ENCODE measurements at regions of chr2 and their contacts with region 1.

Region 1: GRCh38 chr2:7672027-7672684 is 754.9 kb downstream of the RNF144A start:
- DNase-seq: peak; percentile 54
- ATAC-seq: peak; percentile 70
- H3K4me3 ChIP-seq: no peak overlapping the region
- H3K27ac ChIP-seq: no peak overlapping the region
- H3K4me1 ChIP-seq: no peaks in the 10 kb centered on the region
- H3K27me3 ChIP-seq: 0 out of 2 replicates have a peak, but pooled peaks cover 3% of the 10 kb centered on the region
- CTCF ChIP-seq: peak; percentile 57 to 87 (median 79); a peak in 5 of 6 replicates
- POLR2A ChIP-seq: no peak
- RAD21 ChIP-seq: peak; percentile 66

Region 2: DNA sequence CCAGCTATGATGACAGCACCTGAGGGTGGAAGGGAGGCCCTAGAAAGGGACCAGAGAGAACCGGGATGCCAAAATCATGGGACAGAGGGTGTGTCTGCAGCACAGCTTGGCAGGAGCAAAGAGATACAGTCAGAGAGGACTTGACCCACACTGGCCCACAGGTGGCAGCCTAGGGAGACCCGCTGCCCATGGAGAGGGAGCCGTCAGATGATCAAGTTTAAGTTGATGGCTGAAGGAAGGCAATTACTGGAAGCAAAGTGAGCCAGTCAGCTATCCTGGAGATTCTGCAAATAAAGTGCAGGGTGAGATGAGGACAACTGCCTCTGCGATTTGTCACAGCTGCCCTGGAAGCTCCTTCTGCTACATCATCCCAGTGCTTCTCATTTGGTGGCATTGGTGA is 880.5 kb before region 1 on chr2:
- CTCF ChIA-PET with region 1: no interaction called
- POLR2A ChIA-PET with region 1: no interaction called
- RAD21 ChIA-PET with region 1: no interaction called
- intact Hi-C with region 1: no loop called
- DNase-seq: no peak
- ATAC-seq: peak; percentile 90
- H3K4me3 ChIP-seq: no peak overlapping the region
- H3K27ac ChIP-seq: no peak overlapping the region
- H3K4me1 ChIP-seq: no peaks in the 10 kb centered on the region
- H3K27me3 ChIP-seq: 0 out of 2 replicates have a peak, but pooled peaks cover 3% of the 10 kb centered on the region
- CTCF ChIP-seq: peak in 2 of 3 experiments; percentile 45 to 48; a peak in 4 of 6 replicates
- POLR2A ChIP-seq: no peak
- RAD21 ChIP-seq: 0 out of 2 replicates have a peak, but pooled peaks have one; percentile 11

Region 3: DNA sequence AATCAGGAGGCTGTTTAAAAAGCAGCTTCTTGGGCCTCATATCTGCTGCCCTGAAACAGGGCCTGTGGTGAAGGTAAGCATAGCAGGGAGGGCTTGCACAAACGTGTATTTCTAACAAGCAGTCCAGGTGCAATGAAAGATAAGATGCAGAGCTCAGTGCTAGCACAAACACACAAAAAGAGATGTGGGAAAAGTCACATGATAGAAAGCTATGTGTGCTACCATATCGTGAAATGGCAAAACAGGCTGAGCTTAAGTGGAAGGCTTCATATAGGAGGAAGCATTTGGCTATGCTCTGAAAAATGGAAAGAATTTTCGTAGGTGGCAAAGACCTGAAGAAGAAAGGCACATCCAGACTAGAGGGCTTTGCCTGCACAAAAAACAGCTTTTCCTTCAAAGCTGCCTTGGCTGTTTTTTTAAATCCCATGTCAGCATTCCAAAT is 784.4 kb before region 1 on chr2:
- CTCF ChIA-PET with region 1: no interaction called
- POLR2A ChIA-PET with region 1: no interaction called
- RAD21 ChIA-PET with region 1: no interaction called
- intact Hi-C with region 1: no loop called
- DNase-seq: no peak
- ATAC-seq: no peak
- H3K4me3 ChIP-seq: no peak overlapping the region
- H3K27ac ChIP-seq: no peak overlapping the region
- H3K4me1 ChIP-seq: no peaks in the 10 kb centered on the region
- H3K27me3 ChIP-seq: no peaks in the 10 kb centered on the region; the same call in 1 of the 2 replicates
- CTCF ChIP-seq: no peak
- POLR2A ChIP-seq: no peak
- RAD21 ChIP-seq: no peak

Region 4: DNA sequence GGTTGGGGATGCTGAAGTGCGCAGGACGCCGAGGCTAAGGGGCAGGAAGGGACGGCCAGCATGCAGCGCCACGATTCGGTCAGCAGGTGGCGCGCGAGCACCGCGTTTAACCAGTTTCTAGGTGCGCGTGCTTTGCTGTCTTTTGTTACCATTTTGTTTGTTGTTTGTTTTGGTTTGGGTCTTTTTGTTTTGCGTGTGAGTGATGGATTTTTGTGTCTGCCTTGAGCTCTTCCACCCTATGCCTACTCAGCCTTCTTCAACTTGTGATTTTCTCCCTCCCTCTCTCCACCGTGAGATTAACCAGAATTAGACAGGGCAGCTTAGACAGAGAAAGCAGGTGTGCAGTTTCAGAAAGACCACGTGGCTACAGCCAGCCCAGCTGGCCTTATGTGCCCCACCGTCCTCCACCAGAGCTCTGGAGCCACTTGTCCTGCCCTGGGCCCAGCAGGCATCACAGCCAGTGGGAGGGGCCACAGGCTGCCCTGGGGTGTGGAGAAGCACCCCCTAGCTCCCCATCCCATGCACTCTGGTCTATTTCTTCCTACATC is 574.7 kb before region 1 on chr2:
- CTCF ChIA-PET with region 1: no interaction called
- POLR2A ChIA-PET with region 1: no interaction called
- RAD21 ChIA-PET with region 1: no interaction called
- intact Hi-C with region 1: loop called (anchors 5 kb)
- DNase-seq: peak; percentile 36
- ATAC-seq: peak; percentile 97
- H3K4me3 ChIP-seq: peak overlapping the region; percentile 10 to 33; a peak in 2 of 4 replicates
- H3K27ac ChIP-seq: no peak overlapping the region
- H3K4me1 ChIP-seq: peaks cover 5 to 9% of the 10 kb centered on the region in 2 experiments
- H3K27me3 ChIP-seq: no peaks in the 10 kb centered on the region
- CTCF ChIP-seq: peak; percentile 65 to 97 (median 89)
- POLR2A ChIP-seq: no peak
- RAD21 ChIP-seq: peak; percentile 92

Region 5: DNA sequence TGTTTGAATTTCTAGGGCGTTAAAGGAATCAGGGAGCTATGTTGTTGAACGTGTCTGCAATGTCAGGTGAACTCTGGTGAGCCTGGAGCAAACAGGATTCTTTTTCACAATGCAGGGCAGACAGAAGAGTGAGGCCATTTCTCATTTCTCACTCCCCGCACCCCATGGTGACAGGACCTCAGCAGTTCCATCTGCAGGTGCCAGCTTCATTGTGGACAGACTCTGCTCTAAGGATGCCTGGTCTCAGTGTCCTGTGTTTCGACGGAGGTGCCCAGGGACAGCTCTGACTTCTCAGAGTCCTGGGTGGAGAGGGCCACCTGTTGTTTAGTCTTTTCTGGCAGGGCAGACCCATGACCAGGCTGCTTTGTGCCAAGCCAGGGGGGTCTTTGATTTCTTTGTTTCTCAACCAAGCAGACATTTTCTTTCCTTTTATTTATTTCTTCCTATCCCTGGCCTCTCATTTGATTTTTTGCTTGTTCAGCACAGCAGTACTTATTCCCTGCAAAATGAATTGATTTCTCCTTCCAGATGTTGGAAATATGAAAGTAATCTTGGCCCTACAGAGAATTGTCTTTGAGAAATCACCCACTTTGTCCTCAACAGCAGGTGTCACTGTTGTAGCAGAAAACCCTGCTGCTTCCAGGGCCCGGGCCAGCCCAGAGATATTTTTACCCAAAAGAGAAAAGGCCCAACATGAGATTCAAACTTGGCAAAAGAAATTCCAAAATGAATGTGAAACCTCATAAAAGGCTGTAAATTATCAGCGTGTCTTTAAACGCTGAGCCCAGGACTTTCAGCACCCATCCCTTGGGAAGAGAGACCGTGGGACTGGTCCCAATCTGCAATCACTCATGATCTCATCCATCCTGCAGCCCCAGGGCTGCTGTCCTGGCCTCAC is 553.3 kb before region 1 on chr2:
- CTCF ChIA-PET with region 1: no interaction called
- POLR2A ChIA-PET with region 1: no interaction called
- RAD21 ChIA-PET with region 1: no interaction called
- intact Hi-C with region 1: loop called (anchors 1 kb)
- DNase-seq: no peak
- ATAC-seq: peak; percentile 78
- H3K4me3 ChIP-seq: no peak overlapping the region
- H3K27ac ChIP-seq: no peak overlapping the region
- H3K4me1 ChIP-seq: peaks cover 0 to 4% of the 10 kb centered on the region in 2 experiments; a peak in 2 of 4 replicates
- H3K27me3 ChIP-seq: peaks cover 7% of the 10 kb centered on the region; the same call in 1 of the 2 replicates
- CTCF ChIP-seq: peak; percentile 47 to 69 (median 48); a peak in 5 of 6 replicates
- POLR2A ChIP-seq: no peak
- RAD21 ChIP-seq: peak; percentile 74

Region 6: GRCh38 chr2:7203055-7203467 is 469.1 kb before region 1 on chr2:
- CTCF ChIA-PET with region 1: no interaction called
- POLR2A ChIA-PET with region 1: no interaction called
- RAD21 ChIA-PET with region 1: no interaction called
- intact Hi-C with region 1: loop called (anchors 5 kb)
- DNase-seq: peak; percentile 24
- ATAC-seq: peak; percentile 71
- H3K4me3 ChIP-seq: no peak overlapping the region
- H3K27ac ChIP-seq: no peak overlapping the region
- H3K4me1 ChIP-seq: no peaks in the 10 kb centered on the region
- H3K27me3 ChIP-seq: no peaks in the 10 kb centered on the region
- CTCF ChIP-seq: peak; percentile 52 to 96 (median 77); a peak in 5 of 6 replicates
- POLR2A ChIP-seq: no peak
- RAD21 ChIP-seq: peak; percentile 73

Region 7: DNA sequence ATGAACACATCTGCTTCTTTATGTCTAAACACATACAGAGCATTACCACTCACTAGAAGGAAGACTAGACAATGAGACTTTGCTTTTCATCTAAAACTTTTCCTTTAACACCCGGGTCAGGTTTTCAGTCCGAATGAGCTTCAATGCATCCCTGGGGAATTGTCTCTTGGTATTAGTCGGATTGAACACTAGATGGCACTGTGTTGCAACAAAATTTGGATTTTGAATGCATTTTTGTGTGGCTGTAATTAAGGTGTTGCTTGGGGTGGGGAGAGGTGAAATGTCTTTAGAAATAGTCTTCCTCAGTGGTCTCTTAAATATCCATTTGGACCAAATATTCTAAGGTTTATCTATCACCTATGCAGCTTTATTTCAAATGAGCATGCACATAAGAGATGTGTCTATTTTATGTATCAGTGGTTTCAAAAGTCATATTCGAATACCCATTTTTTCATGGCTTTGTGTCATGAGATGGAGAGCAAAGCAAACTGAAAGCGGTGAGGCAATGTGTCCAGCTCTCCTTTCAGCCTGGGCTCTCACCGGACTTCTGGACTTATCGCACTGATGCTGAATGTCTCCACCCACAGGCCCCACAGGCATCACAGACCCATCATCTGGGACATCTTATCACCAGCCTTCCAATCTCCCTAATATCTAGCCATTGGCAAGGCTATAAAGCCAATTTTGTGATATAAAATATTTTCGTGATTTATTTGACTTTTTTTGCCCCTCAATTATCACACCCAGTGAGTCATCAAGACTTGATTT is 244.7 kb before region 1 on chr2:
- CTCF ChIA-PET with region 1: interaction called, 4 read pairs
- POLR2A ChIA-PET with region 1: no interaction called
- RAD21 ChIA-PET with region 1: no interaction called
- intact Hi-C with region 1: loop called (anchors 1 kb)
- DNase-seq: peak; percentile 38
- ATAC-seq: peak; percentile 73
- H3K4me3 ChIP-seq: no peak overlapping the region
- H3K27ac ChIP-seq: no peak overlapping the region
- H3K4me1 ChIP-seq: no peaks in the 10 kb centered on the region
- H3K27me3 ChIP-seq: peaks cover 29% of the 10 kb centered on the region
- CTCF ChIP-seq: peak; percentile 44 to 76 (median 56); a peak in 4 of 6 replicates
- POLR2A ChIP-seq: no peak
- RAD21 ChIP-seq: peak; percentile 81

Region 8: GRCh38 chr2:7962161-7962560 is 290.0 kb after region 1 on chr2:
- CTCF ChIA-PET with region 1: no interaction called
- POLR2A ChIA-PET with region 1: no interaction called
- RAD21 ChIA-PET with region 1: no interaction called
- intact Hi-C with region 1: no loop called
- DNase-seq: no peak
- ATAC-seq: no peak
- H3K4me3 ChIP-seq: no peak overlapping the region
- H3K27ac ChIP-seq: no peak overlapping the region
- H3K4me1 ChIP-seq: no peaks in the 10 kb centered on the region
- H3K27me3 ChIP-seq: no peaks in the 10 kb centered on the region
- CTCF ChIP-seq: no peak
- POLR2A ChIP-seq: no peak
- RAD21 ChIP-seq: no peak

Region 9: DNA sequence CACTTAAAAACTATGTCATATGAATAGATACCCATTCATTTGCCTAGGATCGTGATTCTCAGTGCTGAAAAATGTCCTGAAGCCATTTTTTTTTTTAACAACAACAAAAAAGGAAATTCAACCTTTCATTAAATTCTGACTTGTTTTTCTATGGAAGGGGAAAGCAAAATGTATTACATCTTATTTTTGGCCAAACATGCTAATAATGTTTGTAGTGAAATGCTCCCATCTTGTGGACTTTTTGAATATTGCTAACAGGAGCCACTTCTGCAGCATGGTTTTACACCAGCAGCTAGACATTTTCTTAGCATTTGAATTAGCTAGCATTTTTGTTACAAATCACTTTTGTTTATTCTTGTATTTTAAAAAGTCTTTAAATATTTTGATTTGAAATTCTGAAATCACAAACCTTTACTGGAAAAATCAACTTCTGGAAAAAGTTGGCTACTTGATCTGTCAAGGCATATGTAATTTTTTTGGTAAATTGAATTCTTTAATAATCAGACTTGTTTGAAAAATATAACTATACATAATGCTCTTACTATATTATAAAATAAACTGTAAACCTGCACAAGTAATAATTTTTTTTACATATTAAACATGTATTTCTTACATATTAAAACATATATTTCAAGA is 1089.5 kb after region 1 on chr2:
- CTCF ChIA-PET with region 1: interaction called, 4 read pairs
- POLR2A ChIA-PET with region 1: no interaction called
- RAD21 ChIA-PET with region 1: no interaction called
- intact Hi-C with region 1: loop called (anchors 5 kb)
- DNase-seq: peak; percentile 23
- ATAC-seq: no peak
- H3K4me3 ChIP-seq: no peak overlapping the region
- H3K27ac ChIP-seq: no peak overlapping the region
- H3K4me1 ChIP-seq: no peaks in the 10 kb centered on the region; a peak in 1 of 4 replicates
- H3K27me3 ChIP-seq: no peaks in the 10 kb centered on the region
- CTCF ChIP-seq: peak; percentile 32 to 62 (median 43); a peak in 4 of 6 replicates
- POLR2A ChIP-seq: no peak
- RAD21 ChIP-seq: peak; percentile 68

Measured in HCT116 (cell line).